ENCODE measurements at regions of chr13 and their contacts with region 1.

Region 1: DNA sequence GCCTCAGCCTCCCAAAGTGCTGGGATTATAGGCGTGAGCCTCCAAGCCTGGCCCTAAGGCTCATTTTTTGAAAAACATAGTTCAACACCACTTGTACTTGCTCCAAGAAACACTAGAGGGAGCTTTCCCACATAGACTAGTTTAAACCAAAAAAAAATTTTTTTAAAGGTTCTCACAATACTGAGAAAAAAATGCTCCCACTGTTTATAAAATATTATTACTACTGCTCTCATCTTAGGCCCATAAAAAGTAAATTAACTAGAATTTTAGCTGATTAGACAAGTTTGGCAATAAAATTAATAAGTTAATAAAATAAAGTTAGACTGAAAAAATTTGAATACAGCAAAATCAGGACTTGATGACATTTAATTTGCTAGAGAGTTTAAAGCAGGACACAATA is 109.5 kb downstream of the TBC1D4 start:
- DNase-seq: no peak
- H3K4me3 Mint-ChIP-seq: no peak overlapping the region
- H3K27ac Mint-ChIP-seq: no peak overlapping the region
- H3K4me1 Mint-ChIP-seq: peaks cover 3% of the 10 kb centered on the region
- H3K27me3 Mint-ChIP-seq: peaks cover 1% of the 10 kb centered on the region

Region 2: DNA sequence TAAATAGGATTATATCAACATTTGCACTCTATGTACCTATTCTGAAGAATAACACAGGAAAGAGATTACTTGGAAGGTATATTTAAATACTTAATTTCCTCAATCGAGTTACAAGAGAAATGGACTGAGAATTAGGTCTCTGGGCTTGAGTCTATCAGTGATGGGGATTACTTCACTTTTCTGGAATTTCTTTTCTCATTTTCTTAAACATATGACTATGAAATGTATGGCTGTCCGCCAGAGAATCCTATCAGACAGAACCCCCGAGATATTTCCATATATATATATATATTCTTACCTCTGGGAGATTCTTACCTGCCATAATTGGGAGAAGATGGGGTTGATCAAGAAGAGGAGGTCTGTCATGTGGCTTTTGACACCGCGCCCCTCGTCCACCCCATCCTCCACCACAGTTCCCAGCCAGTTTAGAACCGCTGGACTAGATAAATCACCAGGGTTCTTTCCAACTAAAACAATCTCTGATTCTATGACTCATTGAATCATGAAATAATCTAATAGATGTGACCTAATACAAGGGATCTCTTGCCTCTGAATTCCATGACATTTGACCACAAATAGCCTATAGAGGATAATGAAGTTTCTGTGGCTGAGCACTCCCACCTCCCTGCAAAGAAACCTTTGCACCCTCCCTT is 121.9 kb before region 1 on chr13:
- CTCF ChIA-PET with region 1: no interaction called
- POLR2A ChIA-PET with region 1: no interaction called
- intact Hi-C with region 1: no loop called
- DNase-seq: no peak
- H3K4me3 Mint-ChIP-seq: no peak overlapping the region
- H3K27ac Mint-ChIP-seq: no peak overlapping the region
- H3K4me1 Mint-ChIP-seq: no peaks in the 10 kb centered on the region
- H3K27me3 Mint-ChIP-seq: peaks cover 4% of the 10 kb centered on the region

Region 3: DNA sequence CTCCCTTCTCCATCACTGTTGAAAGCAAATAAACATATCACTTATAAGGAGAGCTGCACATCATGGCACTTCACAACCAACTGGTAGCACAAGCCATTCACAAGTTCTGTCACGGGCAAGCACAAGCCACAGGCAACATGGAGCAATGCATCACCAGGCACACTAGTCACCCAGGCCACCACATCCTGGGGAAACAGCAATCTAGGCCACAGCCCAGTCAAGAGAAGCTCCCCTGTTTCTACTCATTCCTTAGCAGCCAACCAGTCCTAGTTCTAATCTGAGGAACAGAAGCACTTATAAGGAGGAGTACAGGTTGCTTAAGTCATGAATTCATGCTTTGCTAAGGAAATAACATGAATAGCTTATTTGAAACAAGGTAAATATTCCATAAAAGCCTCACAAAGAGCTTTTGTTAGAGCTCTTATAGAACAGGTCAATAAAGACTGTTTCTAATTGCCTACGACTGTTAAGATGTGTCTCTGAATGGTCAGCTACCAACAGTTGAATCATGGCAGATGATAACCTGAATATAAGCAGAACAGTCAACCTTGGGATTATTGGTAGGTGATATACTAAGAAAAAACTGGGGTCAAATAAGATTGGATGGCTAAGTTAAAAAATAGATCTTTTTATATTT is 59.5 kb before region 1 on chr13:
- CTCF ChIA-PET with region 1: interaction called, 10 read pairs
- POLR2A ChIA-PET with region 1: no interaction called
- intact Hi-C with region 1: no loop called
- DNase-seq: peak; percentile 80
- H3K4me3 Mint-ChIP-seq: no peak overlapping the region
- H3K27ac Mint-ChIP-seq: peak overlapping the region; percentile 2
- H3K4me1 Mint-ChIP-seq: peaks cover 57% of the 10 kb centered on the region
- H3K27me3 Mint-ChIP-seq: no peaks in the 10 kb centered on the region

Region 4: GRCh38 chr13:75357576-75358289 is 14.8 kb before region 1 on chr13:
- CTCF ChIA-PET with region 1: interaction called, 11 read pairs
- POLR2A ChIA-PET with region 1: no interaction called
- intact Hi-C with region 1: no loop called
- DNase-seq: peak; percentile 65
- H3K4me3 Mint-ChIP-seq: no peak overlapping the region
- H3K27ac Mint-ChIP-seq: no peak overlapping the region
- H3K4me1 Mint-ChIP-seq: peaks cover 2% of the 10 kb centered on the region
- H3K27me3 Mint-ChIP-seq: no peaks in the 10 kb centered on the region

Measured in activated CD4-positive, alpha-beta memory T cell treated with anti-CD3 and anti-CD28 coated beads for 36 hours (primary cell).